ENCODE measurements at regions of chr12 and their contacts with region 1.

Region 1: DNA sequence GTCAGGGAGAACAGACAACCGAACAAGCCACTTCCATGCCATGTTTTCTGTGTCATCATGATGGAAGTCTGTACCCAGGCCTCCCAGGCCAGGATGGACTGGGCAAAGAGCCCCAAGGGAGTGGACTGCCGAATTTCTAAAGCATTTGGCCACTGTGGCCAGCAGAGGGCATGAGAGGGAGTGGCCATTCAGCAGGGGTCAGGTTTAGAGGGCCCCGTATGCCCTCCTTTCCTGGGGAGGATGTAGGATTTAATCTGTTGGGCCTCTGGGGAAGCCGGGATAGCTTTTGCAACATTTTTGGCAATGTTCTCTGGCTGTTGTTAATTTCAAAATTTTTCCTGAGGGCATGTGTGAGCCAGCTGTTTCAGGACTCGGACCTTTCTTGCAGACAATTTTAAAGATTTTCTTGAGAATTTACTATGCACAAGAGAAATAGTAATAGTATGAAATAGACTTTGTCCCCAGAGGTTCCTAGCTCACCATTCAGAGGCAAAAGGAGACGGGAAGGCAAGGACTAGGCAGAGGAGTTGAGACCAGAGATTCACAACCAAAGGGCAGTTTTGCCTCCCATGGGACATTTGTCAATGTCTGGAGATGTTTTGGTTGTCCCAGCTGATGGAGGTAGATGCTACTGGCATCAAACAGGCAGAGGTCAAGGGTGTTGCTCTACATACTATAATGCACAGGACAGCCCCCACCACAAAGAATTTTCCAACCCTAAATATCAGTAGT is 18.0 kb downstream of the ACACB start:
- DNase-seq: peak; percentile 45 to 65 (median 51)
- ATAC-seq: peak; percentile 87
- H3K4me3 ChIP-seq: no peak overlapping the region
- H3K27ac ChIP-seq: no peak overlapping the region
- H3K4me1 ChIP-seq: no peaks in the 10 kb centered on the region; a peak in 3 of 5 replicates
- H3K27me3 ChIP-seq: peaks cover 21 to 37% of the 10 kb centered on the region in 2 experiments; a peak in 4 of 5 replicates
- CTCF ChIP-seq: peak; percentile 62 to 79 (median 68)
- EP300 ChIP-seq: no peak
- POLR2A ChIP-seq: no peak
- RAD21 ChIP-seq: peak; percentile 25 to 68

Region 2: DNA sequence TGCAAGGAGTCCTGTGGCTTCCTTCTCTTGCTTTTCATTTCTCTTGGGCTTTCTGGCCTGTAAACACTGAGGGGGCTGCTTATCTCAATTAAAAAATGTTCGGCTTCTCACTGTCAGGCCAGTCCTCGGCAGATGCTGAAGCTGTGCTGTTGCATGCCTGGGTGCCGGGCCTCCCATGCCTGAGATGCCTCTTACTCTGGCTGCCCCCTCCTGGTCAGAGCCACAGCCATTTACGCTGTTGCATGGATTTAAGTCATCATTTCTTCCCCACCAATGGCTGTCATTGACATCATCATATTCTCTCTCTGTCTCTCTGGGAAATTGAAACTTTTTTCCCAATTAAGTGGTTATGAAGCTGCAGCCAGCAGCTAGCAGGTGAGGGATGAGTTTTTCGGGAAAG is 121.0 kb after region 1 on chr12:
- CTCF ChIA-PET with region 1: interaction called, 5 read pairs
- POLR2A ChIA-PET with region 1: no interaction called
- in situ Hi-C with region 1: no loop called
- intact Hi-C with region 1: loop called (anchors 5 kb)
- DNase-seq: peak in 3 of 4 experiments; percentile 21 to 37 (median 27)
- ATAC-seq: peak; percentile 88
- H3K4me3 ChIP-seq: no peak overlapping the region
- H3K27ac ChIP-seq: no peak overlapping the region
- H3K4me1 ChIP-seq: no peaks in the 10 kb centered on the region
- H3K27me3 ChIP-seq: peaks cover 4 to 19% of the 10 kb centered on the region in 2 experiments; a peak in 3 of 5 replicates
- CTCF ChIP-seq: peak; percentile 51 to 63 (median 56)
- EP300 ChIP-seq: no peak
- POLR2A ChIP-seq: no peak
- RAD21 ChIP-seq: peak in 1 of 2 experiments; percentile 63; a peak in 2 of 4 replicates

Measured in K562 (cell line).